Activated T-helper 1 cell treated with anti-CD3 and anti-CD28 coated beads, Interleukin-12 subunit alpha, Interleukin-12 subunit beta, Interleukin-2, Interleukin-4 antibody, amounts not matched to agents 30 ng/mL and 10 ng/mL and 1 ng/mL, durations not matched to agents 14 hours and 24 hours and 36 hours (primary cell): ENCODE measurements at regions of chr5 and their contacts with region 1.

Region 1: DNA sequence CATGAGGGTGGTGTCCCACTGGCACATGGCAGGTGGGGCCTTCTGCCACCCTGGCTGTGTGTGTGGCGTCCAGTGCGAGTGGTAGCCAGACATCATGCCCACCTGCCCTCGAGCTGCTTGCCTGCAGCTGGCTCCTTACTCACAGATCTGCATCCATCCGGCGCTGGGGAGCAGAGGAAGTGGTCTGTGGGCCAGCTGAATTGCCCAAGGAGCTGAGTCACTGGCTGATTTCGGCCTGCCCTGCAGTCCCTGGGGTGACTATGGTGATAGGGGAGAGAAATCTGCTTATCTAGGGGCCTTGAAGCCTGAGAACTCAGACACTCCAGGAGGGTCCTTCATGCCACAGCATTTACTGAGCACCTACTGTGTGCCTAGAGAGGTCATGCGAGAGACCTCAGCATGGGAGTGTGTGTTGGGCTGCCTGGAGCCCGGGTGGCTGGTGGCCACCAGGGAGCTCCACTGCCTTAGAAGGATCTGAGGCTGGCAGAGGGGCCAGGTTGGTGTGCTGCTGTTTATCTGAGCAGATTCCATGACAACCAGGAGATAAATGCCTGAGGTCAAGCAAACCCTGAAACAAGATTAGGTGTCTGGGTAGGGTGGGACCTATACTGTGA is 57.1 kb downstream of the SLC22A5 start:
- DNase-seq: peak; percentile 67
- H3K4me3 Mint-ChIP-seq: peak overlapping the region; percentile 72
- H3K27ac Mint-ChIP-seq: peak overlapping the region; percentile 98
- H3K4me1 Mint-ChIP-seq: peaks cover 97% of the 10 kb centered on the region
- H3K27me3 Mint-ChIP-seq: no peaks in the 10 kb centered on the region

Region 2: DNA sequence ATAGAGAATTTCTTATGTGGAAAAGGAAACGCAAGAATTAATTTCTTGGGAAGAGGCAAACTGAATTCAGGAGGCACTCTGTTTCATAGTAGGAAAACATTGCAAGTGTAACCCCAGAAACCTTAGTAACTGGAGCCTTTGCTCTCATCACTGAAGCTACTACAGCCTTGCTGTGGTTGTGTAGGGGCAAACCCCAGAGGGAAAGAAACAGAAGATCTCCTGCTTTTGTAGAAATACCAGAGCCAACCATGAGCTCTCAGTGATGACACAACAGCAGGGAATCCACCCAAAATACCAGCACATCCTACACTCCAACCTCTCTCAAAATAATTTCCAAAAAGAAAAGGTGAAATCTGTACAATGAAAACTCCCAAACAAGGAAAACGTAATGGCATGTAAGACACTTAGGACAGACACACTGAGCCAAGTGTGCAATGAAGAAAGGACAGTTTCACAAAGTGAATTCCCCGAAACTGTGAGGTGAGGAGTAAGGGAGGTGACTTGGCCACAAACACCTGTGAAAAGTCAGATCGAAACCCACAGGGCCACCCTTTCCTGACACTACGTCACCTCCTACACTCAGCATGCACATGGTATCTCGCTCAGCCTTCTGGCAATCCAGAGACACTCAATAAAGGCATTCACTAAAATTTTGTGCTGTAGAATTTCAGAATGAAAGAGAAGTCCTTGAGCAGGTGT is 406.6 kb before region 1 on chr5:
- intact Hi-C with region 1: loop called (anchors 5 kb)
- DNase-seq: peak; percentile 85
- H3K4me3 Mint-ChIP-seq: peak overlapping the region; percentile 50
- H3K27ac Mint-ChIP-seq: peak overlapping the region; percentile 92
- H3K4me1 Mint-ChIP-seq: peaks cover 51% of the 10 kb centered on the region
- H3K27me3 Mint-ChIP-seq: peaks cover 48% of the 10 kb centered on the region

Region 3: GRCh38 chr5:132238169-132238744 is 188.4 kb before region 1 on chr5:
- intact Hi-C with region 1: no loop called
- DNase-seq: peak; percentile 59
- H3K4me3 Mint-ChIP-seq: no peak overlapping the region
- H3K27ac Mint-ChIP-seq: no peak overlapping the region
- H3K4me1 Mint-ChIP-seq: peaks cover 6% of the 10 kb centered on the region
- H3K27me3 Mint-ChIP-seq: peaks cover 4% of the 10 kb centered on the region

Region 4: GRCh38 chr5:132394667-132395259 is 31.9 kb before region 1 on chr5:
- intact Hi-C with region 1: no loop called
- DNase-seq: no peak
- H3K4me3 Mint-ChIP-seq: no peak overlapping the region
- H3K27ac Mint-ChIP-seq: no peak overlapping the region
- H3K4me1 Mint-ChIP-seq: peaks cover 76% of the 10 kb centered on the region
- H3K27me3 Mint-ChIP-seq: no peaks in the 10 kb centered on the region

Region 5: DNA sequence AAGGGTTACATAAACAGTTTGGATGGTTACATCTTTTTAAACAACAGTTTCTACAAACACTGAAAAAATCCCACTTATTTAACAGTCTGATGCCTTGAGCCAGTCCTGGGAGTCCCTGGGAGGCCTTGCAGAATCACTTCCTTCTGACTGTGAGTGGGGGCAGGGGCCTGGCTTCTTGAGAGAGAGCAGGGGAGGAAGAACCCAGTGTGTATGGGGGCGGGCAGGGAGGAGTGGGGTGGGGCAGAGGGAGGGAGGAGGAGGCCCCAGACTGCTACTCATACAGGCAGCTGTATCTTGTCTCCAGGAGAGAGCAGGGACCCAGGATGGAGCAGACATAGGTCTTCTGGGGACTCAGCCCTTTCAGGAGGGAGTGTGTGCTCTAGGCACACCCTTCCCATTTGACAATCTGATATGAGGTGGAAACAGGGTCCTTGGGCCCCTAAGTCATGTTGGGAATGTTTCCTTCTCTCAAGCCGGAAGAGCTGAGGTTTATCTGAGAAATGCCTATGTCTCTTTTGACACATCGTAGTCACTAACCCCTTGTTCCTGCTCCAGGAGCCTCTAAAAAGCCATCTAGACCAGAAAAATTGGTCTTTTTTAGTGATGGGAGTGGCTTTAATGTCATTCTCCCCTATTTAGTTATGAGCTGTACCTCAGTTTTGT is 11.1 kb after region 1 on chr5:
- intact Hi-C with region 1: loop called (anchors 1 kb)
- DNase-seq: peak; percentile 47
- H3K4me3 Mint-ChIP-seq: peak overlapping the region; percentile 67
- H3K27ac Mint-ChIP-seq: peak overlapping the region; percentile 92
- H3K4me1 Mint-ChIP-seq: peaks cover 87% of the 10 kb centered on the region
- H3K27me3 Mint-ChIP-seq: no peaks in the 10 kb centered on the region

Region 6: GRCh38 chr5:132466433-132467286 is 40.0 kb after region 1 on chr5:
- intact Hi-C with region 1: loop called (anchors 1 kb)
- DNase-seq: peak; percentile 71
- H3K4me3 Mint-ChIP-seq: peak overlapping the region; percentile 77
- H3K27ac Mint-ChIP-seq: peak overlapping the region; percentile 97
- H3K4me1 Mint-ChIP-seq: peaks cover 94% of the 10 kb centered on the region
- H3K27me3 Mint-ChIP-seq: no peaks in the 10 kb centered on the region

Region 7: GRCh38 chr5:132556763-132557477 is 130.3 kb after region 1 on chr5 and contains the start of gene RAD50:
- intact Hi-C with region 1: loop called (anchors 5 kb)
- DNase-seq: peak; percentile 92
- H3K4me3 Mint-ChIP-seq: peak within 1 kb of the TSS; percentile 98
- H3K27ac Mint-ChIP-seq: peak within 1 kb of the TSS; percentile 91
- H3K4me1 Mint-ChIP-seq: peaks cover 32% of the 10 kb centered on the region
- H3K27me3 Mint-ChIP-seq: peaks cover 4% of the 10 kb centered on the region
- total RNA-seq, gene RAD50: 30.9 and 33.0 TPM in 2 replicates